ENCODE measurements at regions of chr22 and their contacts with region 1.

Region 1: GRCh38 chr22:22322792-22323191 is 78.2 kb downstream of the VPREB1 start:
- DNase-seq: no peak
- ATAC-seq: no peak
- H3K4me3 ChIP-seq: no peak overlapping the region
- H3K27ac ChIP-seq: no peak overlapping the region
- H3K4me1 ChIP-seq: no peaks in the 10 kb centered on the region
- H3K27me3 ChIP-seq: no peaks in the 10 kb centered on the region
- CTCF ChIP-seq: no peak

Region 2: GRCh38 chr22:22207845-22208564 is 114.8 kb before region 1 on chr22:
- CTCF ChIA-PET with region 1: interaction called, 3 read pairs
- POLR2A ChIA-PET with region 1: no interaction called
- intact Hi-C with region 1: loop called (anchors 5 kb)
- DNase-seq: peak; percentile 80
- ATAC-seq: peak; percentile 77
- H3K4me3 ChIP-seq: no peak overlapping the region
- H3K27ac ChIP-seq: no peak overlapping the region
- H3K4me1 ChIP-seq: peaks cover 18% of the 10 kb centered on the region
- H3K27me3 ChIP-seq: no peaks in the 10 kb centered on the region
- CTCF ChIP-seq: peak; percentile 73

Region 3: DNA sequence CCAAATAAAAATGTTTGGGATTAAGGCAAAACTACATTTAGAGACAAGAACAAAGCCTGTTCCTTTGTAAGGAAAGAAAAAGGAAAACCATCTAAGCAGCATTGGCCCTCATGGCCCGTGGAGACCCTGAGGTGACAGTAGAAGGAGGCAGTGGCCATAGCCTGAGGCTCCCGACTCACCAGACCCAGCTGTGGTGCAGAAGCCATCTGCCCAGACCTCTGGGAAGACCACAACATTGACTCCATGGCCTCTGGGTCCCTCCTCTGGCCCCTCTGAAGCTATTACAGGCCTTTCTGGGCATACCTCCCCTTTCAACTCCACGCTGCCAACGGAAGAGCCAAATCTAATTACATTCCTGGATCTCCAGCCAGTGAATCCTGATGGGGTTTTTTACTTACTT is 229.8 kb after region 1 on chr22:
- CTCF ChIA-PET with region 1: no interaction called
- POLR2A ChIA-PET with region 1: no interaction called
- intact Hi-C with region 1: no loop called
- DNase-seq: no peak
- ATAC-seq: no peak
- H3K4me3 ChIP-seq: no peak overlapping the region
- H3K27ac ChIP-seq: no peak overlapping the region
- H3K4me1 ChIP-seq: no peaks in the 10 kb centered on the region
- H3K27me3 ChIP-seq: no peaks in the 10 kb centered on the region
- CTCF ChIP-seq: no peak

Measured in PC-3 (cell line).